ENCODE measurements at regions of chr6 and their contacts with region 1.

Region 1: GRCh38 chr6:32047850-32048766 is 9.9 kb downstream of the CYP21A2 start:
- DNase-seq: peak in 1 of 2 donors; percentile 89
- H3K4me3 ChIP-seq: no peak overlapping the region
- H3K27ac ChIP-seq: peak overlapping the region; percentile 88
- H3K4me1 ChIP-seq: peaks cover 28% of the 10 kb centered on the region
- H3K27me3 ChIP-seq: no peaks in the 10 kb centered on the region
- CTCF ChIP-seq: peak; percentile 43 to 77 (median 56)
- POLR2A ChIP-seq: no peak

Region 2: GRCh38 chr6:31888276-31889258 is 159.5 kb before region 1 on chr6:
- intact Hi-C with region 1: no loop called
- DNase-seq: peak in 1 of 2 donors; percentile 89
- H3K4me3 ChIP-seq: no peak overlapping the region
- H3K27ac ChIP-seq: no peak overlapping the region
- H3K4me1 ChIP-seq: no peaks in the 10 kb centered on the region
- H3K27me3 ChIP-seq: no peaks in the 10 kb centered on the region
- CTCF ChIP-seq: peak in 1 of 3 experiments; percentile 16
- POLR2A ChIP-seq: no peak

Region 3: DNA sequence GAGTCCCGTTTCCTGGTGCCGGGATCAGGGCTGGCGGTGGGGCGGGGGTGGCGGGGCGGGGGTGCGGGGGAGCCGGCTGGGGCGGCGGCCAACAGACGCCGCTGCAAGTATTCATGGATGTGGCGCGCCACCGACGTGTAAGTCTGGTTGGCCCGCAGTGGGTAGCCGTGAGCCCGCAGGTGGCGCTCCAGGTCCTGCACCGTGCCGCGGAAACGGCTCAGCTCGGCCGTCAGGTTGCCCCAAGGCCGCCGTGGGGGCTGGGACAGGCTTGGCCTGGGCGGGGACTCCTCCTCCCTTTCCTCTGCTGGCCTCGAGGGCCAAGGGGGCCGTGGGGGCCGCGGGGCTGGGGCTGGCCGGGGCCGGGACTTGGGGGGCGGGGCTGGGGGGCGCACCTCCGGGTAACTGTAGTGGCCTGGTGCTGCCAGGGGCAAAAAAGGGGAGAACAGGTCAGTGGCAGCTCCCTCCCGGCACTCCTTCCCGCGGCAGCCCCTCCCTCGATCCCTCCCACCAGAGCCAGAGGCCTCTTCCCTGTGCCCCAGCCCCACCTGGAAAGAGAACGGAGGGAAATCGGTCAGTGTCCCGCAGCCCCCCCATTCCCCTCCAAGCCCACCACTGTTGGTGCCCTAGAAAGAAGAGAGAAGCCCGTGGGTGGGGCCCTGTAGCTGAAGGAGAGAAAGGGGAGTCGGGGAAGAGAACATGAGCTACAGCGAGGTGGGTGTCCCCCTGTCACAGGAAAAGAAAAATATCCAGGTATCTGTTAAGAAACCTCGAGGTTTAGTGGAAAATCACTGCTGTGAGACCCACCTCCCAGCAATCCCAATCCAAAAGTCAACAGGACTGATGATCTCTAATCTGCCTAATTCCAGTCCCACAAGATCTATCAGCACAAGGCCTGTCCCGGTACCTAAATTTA is 39.7 kb after region 1 on chr6:
- intact Hi-C with region 1: loop called (anchors 2 kb)
- DNase-seq: no peak
- H3K4me3 ChIP-seq: peak overlapping the region; percentile 32 to 37
- H3K27ac ChIP-seq: peak overlapping the region; percentile 96
- H3K4me1 ChIP-seq: peaks cover 46% of the 10 kb centered on the region
- H3K27me3 ChIP-seq: no peaks in the 10 kb centered on the region
- CTCF ChIP-seq: peak in 2 of 3 experiments; percentile 25 to 53
- POLR2A ChIP-seq: no peak

Region 4: DNA sequence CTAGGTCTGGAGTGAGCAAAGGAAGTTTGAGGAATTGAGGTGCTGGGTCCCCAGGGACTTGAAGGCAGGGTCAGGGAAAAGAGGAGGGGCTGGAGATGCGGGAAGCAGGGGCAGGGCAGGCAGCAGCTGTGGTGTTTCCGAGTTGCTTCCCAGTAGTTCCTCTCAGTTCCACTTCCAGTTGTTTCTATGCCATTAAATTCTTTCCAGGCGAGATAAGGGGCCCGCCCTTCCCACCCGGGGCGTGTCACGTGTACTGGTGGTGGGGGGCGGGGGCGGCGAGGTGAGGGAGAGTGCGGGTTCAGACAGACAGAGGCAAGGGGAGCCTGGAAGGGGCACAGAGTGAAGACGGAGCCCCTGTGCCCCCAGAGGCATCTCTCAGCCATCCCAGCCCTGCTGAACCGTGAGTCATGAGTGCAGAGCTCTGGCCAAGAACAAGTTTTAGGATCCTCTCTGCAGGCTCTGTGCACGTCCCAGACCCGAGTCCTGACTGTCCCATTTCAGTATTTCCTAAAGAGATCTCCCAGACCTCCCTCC is 60.1 kb after region 1 on chr6:
- intact Hi-C with region 1: loop called (anchors 2 kb)
- DNase-seq: no peak
- H3K4me3 ChIP-seq: peak overlapping the region; percentile 58 to 60
- H3K27ac ChIP-seq: peak overlapping the region; percentile 94
- H3K4me1 ChIP-seq: peaks cover 85% of the 10 kb centered on the region
- H3K27me3 ChIP-seq: no peaks in the 10 kb centered on the region
- CTCF ChIP-seq: no peak
- POLR2A ChIP-seq: no peak

Region 5: GRCh38 chr6:32212076-32212760 is 164.1 kb after region 1 on chr6:
- intact Hi-C with region 1: no loop called
- DNase-seq: no peak
- H3K4me3 ChIP-seq: no peak overlapping the region
- H3K27ac ChIP-seq: no peak overlapping the region
- H3K4me1 ChIP-seq: no peaks in the 10 kb centered on the region
- H3K27me3 ChIP-seq: no peaks in the 10 kb centered on the region
- CTCF ChIP-seq: no peak
- POLR2A ChIP-seq: no peak